ENCODE measurements at regions of chr20 and their contacts with region 1.

Region 1: DNA sequence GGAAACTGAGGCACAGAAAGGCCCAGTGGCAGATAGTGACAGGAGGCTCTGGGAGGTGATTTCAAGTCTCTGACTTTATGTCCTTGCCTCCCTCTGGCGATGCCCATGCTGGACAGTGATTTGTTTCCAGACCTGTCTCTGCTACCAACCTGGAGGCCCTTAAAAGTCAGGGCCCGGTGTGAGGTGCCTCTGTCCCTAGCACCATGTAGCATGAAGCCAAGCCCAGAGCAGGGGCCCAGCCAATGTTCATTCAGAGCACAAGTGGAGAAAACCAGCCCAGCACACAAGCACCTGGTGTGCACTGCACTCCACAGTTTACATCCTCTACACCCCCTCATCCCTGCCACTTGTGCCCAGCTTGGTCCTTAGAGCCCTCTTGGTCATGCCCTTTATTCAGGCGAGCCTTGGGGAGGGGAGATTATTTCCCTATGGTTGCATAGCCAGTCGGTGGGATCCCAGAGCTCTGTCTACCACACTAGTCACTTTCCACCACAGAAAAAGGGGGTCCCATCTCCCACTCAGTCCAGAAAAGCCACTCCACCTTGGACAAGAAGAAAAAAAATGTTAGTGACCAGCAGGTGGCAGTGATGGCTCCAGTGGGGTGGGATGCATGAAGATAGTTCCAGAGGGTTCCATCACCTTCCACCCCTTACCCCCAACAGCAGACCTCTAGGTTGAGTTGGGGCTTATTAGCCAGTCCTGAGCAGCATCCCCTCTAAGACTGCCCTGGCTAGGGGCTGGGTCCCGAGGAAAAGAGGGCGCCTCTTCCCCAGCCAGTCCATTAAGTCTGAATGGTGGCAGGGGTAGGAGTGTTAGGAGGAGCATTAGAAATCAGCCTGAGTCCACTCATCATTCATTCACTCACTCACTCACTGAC is 30.9 kb downstream of the KIAA1755 start:
- DNase-seq: peak in 1 of 3 donors; percentile 43
- ATAC-seq: no peak
- H3K4me3 ChIP-seq: no peak overlapping the region
- H3K27ac ChIP-seq: no peak overlapping the region
- H3K4me1 ChIP-seq: no peaks in the 10 kb centered on the region
- H3K27me3 ChIP-seq: no peaks in the 10 kb centered on the region

Region 2: GRCh38 chr20:38290832-38291581 is 61.4 kb after region 1 on chr20:
- intact Hi-C with region 1: loop called in 1 of 4 experiments (anchors 10 kb)
- DNase-seq: peak; percentile 78 to 88 (median 87)
- ATAC-seq: peak; percentile 75 to 91
- H3K4me3 ChIP-seq: no peak overlapping the region
- H3K27ac ChIP-seq: no peak overlapping the region
- H3K4me1 ChIP-seq: no peaks in the 10 kb centered on the region
- H3K27me3 ChIP-seq: no peaks in the 10 kb centered on the region

Region 3: GRCh38 chr20:38304845-38305447 is 75.3 kb after region 1 on chr20:
- intact Hi-C with region 1: loop called in 1 of 4 experiments (anchors 5 kb)
- DNase-seq: peak in 1 of 3 donors; percentile 61
- ATAC-seq: peak in 1 of 2 donors; percentile 24
- H3K4me3 ChIP-seq: no peak overlapping the region
- H3K27ac ChIP-seq: no peak overlapping the region
- H3K4me1 ChIP-seq: no peaks in the 10 kb centered on the region
- H3K27me3 ChIP-seq: no peaks in the 10 kb centered on the region

Region 4: DNA sequence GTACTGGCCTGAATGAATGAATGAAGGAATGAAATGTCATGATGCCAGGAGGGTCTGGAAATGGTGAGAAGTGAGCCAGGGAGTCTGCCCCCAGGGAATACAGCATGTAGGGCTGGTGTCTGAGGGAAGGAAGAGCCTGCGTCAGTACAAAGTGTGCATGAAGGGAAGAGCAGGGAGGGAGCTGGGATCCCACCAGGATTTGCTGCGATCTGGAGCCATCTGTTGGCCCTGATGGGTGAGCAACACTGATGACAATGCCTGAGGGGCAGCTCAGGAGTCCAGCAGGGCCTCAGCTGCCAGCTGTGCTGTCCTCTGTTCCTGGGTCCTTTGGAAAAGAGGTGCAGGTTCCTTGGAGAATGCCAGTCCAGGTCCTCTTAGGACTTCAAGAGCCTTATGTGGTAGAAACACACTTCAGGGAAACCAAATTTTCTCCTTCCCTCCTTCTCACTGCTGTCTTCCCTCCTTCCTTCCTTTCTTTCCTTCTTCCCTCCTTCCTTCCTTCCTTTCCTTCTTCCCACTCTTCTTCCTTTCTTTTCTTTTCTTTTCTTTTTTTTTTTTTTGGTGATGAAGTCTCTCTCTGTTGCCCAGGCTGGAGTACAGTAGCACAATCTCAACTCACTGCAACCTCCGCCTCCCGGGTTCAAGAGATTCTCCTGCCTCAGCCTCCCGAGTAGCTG is 85.8 kb after region 1 on chr20:
- intact Hi-C with region 1: loop called in 3 of 4 experiments (anchors 5 to 10 kb)
- DNase-seq: peak in 1 of 3 donors; percentile 67
- ATAC-seq: peak; percentile 45 to 56
- H3K4me3 ChIP-seq: no peak overlapping the region
- H3K27ac ChIP-seq: no peak overlapping the region
- H3K4me1 ChIP-seq: no peaks in the 10 kb centered on the region
- H3K27me3 ChIP-seq: no peaks in the 10 kb centered on the region

Region 5: GRCh38 chr20:38321959-38322598 is 92.5 kb after region 1 on chr20:
- intact Hi-C with region 1: loop called in 3 of 4 experiments (anchors 5 to 10 kb)
- DNase-seq: peak in 2 of 3 donors; percentile 53 to 76
- ATAC-seq: peak; percentile 62 to 64
- H3K4me3 ChIP-seq: no peak overlapping the region
- H3K27ac ChIP-seq: no peak overlapping the region
- H3K4me1 ChIP-seq: no peaks in the 10 kb centered on the region
- H3K27me3 ChIP-seq: no peaks in the 10 kb centered on the region

Region 6: GRCh38 chr20:38412877-38413577 is 183.4 kb after region 1 on chr20:
- intact Hi-C with region 1: no loop called
- DNase-seq: no peak
- ATAC-seq: no peak
- H3K4me3 ChIP-seq: no peak overlapping the region
- H3K27ac ChIP-seq: no peak overlapping the region
- H3K4me1 ChIP-seq: no peaks in the 10 kb centered on the region
- H3K27me3 ChIP-seq: no peaks in the 10 kb centered on the region